Natural killer cell (primary cell): ENCODE measurements at regions of chr6 and their contacts with region 1.

Region 1: GRCh38 chr6:27157459-27158315 is 89.8 kb upstream of the PRSS16 start:
- DNase-seq: peak; percentile 68 to 92
- ATAC-seq: peak; percentile 78 to 86 (median 84)
- H3K4me3 ChIP-seq: peak overlapping the region; percentile 48
- H3K4me3 Mint-ChIP-seq: peak overlapping the region; percentile 89
- H3K27ac ChIP-seq: peak overlapping the region; percentile 34
- H3K27ac Mint-ChIP-seq: peak overlapping the region; percentile 90 to 91
- H3K4me1 ChIP-seq: peaks cover 13% of the 10 kb centered on the region
- H3K4me1 Mint-ChIP-seq: peaks cover 29 to 36% of the 10 kb centered on the region in 2 donors
- H3K27me3 ChIP-seq: no peaks in the 10 kb centered on the region
- H3K27me3 Mint-ChIP-seq: peaks cover 0 to 7% of the 10 kb centered on the region in 2 donors
- CTCF ChIP-seq: peak; percentile 28

Region 2: GRCh38 chr6:26351544-26351953 is 806.1 kb before region 1 on chr6:
- intact Hi-C with region 1: no loop called
- DNase-seq: no peak
- ATAC-seq: peak in 1 of 3 donors; percentile 18
- H3K4me3 ChIP-seq: no peak overlapping the region
- H3K4me3 Mint-ChIP-seq: no peak overlapping the region
- H3K27ac ChIP-seq: no peak overlapping the region
- H3K27ac Mint-ChIP-seq: no peak overlapping the region
- H3K4me1 ChIP-seq: no peaks in the 10 kb centered on the region
- H3K4me1 Mint-ChIP-seq: no peaks in the 10 kb centered on the region
- H3K27me3 ChIP-seq: no peaks in the 10 kb centered on the region
- H3K27me3 Mint-ChIP-seq: peaks cover 0 to 7% of the 10 kb centered on the region in 2 donors
- CTCF ChIP-seq: no peak

Region 3: DNA sequence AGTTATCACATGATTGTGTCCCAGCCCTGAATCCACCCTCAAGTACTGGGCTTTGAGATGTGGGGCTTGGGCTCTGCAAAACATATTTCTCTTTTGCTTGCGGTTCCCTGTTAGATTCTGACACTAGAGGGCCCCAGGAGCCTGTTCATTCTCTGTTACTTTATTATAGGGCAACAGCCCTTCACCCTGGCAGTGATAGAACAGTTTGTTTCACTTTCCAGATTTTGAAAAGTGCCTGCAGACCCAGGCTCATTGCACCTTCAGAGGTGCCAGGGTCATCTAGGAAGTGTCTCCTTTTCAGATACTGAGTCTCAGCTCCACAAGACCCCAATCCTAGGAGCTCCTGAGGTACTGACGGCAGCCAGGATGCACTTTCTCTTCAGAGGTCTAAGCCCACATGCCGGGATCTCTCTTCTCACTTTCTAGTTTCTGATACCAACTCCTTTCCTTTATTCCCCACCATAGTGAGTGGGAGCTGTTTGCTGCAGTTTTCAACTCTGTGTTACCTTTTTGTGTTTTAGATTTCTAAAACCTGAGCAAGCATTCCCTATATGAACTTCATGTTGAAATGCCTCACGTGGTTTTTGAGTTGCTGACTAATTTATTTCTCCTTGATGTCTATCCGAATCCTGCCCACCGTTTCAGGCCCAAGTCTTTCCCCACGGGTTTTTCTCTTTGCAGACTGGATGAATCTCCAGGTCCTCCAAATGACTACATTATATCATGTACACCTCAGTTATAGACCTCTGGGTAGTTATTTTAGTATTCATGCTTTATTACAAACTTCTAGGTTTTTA is 550.1 kb before region 1 on chr6:
- intact Hi-C with region 1: loop called (anchors 5 kb)
- DNase-seq: peak in 1 of 2 donors; percentile 81
- ATAC-seq: peak; percentile 81 to 96 (median 93)
- H3K4me3 ChIP-seq: no peak overlapping the region
- H3K4me3 Mint-ChIP-seq: peak overlapping the region; percentile 47
- H3K27ac ChIP-seq: no peak overlapping the region
- H3K27ac Mint-ChIP-seq: no peak overlapping the region
- H3K4me1 ChIP-seq: no peaks in the 10 kb centered on the region
- H3K4me1 Mint-ChIP-seq: peaks cover 5 to 6% of the 10 kb centered on the region in 2 donors
- H3K27me3 ChIP-seq: no peaks in the 10 kb centered on the region
- H3K27me3 Mint-ChIP-seq: peaks cover 16 to 23% of the 10 kb centered on the region in 2 donors
- CTCF ChIP-seq: peak; percentile 66

Region 4: DNA sequence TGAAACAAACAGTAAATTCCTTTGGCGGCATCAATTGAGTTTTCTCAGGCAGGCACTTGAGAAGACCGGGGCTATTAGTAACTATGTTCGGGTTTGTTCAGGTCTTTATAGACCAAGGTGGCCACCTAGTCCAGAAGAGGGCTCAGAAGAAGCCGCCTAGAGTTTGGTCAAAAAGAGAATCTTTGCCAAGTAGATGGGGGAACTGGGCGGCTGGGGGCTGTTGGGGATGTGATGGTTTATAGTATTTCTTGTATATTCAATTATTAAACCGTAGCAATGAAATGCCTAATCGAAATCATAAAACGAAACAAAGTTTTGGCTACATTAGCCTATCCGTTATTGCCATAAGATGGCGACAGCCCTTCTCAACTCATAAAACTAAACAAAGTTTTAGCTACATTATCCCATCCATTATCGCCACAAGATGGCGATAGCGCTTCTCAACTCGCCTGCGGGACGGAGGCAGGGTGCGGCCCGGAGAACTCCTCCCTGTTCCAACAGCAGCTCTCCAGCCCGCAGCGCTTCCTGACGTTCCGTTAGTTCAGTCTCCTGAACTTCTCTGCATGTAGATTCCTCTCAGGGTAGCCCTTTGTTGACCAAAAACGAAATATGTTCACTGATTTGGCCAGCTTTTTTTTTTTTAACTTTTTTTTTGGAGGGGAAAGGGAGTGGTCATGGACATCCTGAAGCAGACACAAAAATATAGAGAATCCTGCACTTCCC is 30.7 kb before region 1 on chr6:
- intact Hi-C with region 1: loop called (anchors 1 kb)
- DNase-seq: peak; percentile 68 to 95
- ATAC-seq: peak; percentile 79 to 88 (median 82)
- H3K4me3 ChIP-seq: peak overlapping the region; percentile 12
- H3K4me3 Mint-ChIP-seq: peak overlapping the region; percentile 82
- H3K27ac ChIP-seq: peak overlapping the region; percentile 39
- H3K27ac Mint-ChIP-seq: peak overlapping the region; percentile 69 to 84
- H3K4me1 ChIP-seq: peaks cover 15% of the 10 kb centered on the region
- H3K4me1 Mint-ChIP-seq: peaks cover 14% of the 10 kb centered on the region in 2 donors
- H3K27me3 ChIP-seq: no peaks in the 10 kb centered on the region
- H3K27me3 Mint-ChIP-seq: no peaks in the 10 kb centered on the region
- CTCF ChIP-seq: peak; percentile 89

Region 5: DNA sequence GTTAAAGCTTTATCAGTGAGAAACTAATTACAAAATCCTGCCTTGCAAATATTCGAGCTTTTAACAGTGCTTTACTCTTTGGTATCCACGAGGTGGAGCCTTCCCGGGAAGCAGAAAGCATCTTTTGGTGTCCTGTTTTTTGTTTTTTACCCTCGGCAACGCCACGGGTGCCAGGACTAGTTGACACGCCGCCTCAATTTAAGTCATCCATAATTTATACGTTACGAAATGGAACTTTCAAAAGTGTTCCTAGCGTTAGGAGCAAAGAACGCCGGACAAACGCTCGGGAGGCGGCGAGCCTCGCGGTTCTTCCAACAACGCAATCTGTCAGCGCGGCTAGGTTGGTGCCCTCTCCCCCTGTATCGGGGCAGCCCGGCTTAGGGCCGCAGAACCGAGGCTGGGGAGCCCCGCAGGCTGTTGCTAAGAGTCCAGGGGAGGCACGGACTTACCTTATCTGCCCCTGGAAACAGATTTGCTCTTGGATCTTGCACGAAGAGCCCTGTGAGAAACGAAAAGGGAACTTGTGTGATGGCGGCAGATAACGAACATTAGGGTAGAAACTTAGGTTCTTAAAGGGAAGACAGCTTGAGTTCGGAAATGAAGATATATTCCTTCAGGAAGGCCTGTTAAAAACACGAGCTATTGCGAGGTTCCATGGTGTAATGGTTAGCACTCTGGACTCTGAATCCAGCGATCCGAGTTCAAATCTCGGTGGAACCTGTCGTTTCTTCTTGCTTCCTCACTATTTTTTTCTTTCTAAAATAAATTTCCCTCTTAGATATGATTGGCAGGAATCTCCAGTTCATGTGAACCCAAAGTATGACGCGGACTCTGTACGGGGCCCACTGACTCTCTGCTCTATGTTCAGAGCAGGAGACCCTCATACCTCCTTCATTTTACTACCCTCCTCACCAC is 361.5 kb after region 1 on chr6:
- intact Hi-C with region 1: loop called (anchors 5 kb)
- DNase-seq: peak; percentile 49 to 88
- ATAC-seq: peak; percentile 61 to 81 (median 81)
- H3K4me3 ChIP-seq: peak overlapping the region; percentile 82
- H3K4me3 Mint-ChIP-seq: peak overlapping the region; percentile 91
- H3K27ac ChIP-seq: peak overlapping the region; percentile 71
- H3K27ac Mint-ChIP-seq: peak overlapping the region; percentile 87 to 88
- H3K4me1 ChIP-seq: peaks cover 11% of the 10 kb centered on the region
- H3K4me1 Mint-ChIP-seq: peaks cover 16 to 17% of the 10 kb centered on the region in 2 donors
- H3K27me3 ChIP-seq: peaks cover 9% of the 10 kb centered on the region
- H3K27me3 Mint-ChIP-seq: peaks cover 29 to 46% of the 10 kb centered on the region in 2 donors
- CTCF ChIP-seq: peak; percentile 79

Region 6: GRCh38 chr6:27687154-27688013 is 529.7 kb after region 1 on chr6:
- intact Hi-C with region 1: loop called (anchors 2 kb)
- DNase-seq: peak; percentile 67 to 88
- ATAC-seq: peak; percentile 75 to 83 (median 76)
- H3K4me3 ChIP-seq: peak overlapping the region; percentile 52
- H3K4me3 Mint-ChIP-seq: peak overlapping the region; percentile 95
- H3K27ac ChIP-seq: no peak overlapping the region
- H3K27ac Mint-ChIP-seq: peak overlapping the region; percentile 94 to 96
- H3K4me1 ChIP-seq: peaks cover 12% of the 10 kb centered on the region
- H3K4me1 Mint-ChIP-seq: peaks cover 14 to 22% of the 10 kb centered on the region in 2 donors
- H3K27me3 ChIP-seq: peaks cover 2% of the 10 kb centered on the region
- H3K27me3 Mint-ChIP-seq: peaks cover 8 to 32% of the 10 kb centered on the region in 2 donors
- CTCF ChIP-seq: peak; percentile 53

Region 7: DNA sequence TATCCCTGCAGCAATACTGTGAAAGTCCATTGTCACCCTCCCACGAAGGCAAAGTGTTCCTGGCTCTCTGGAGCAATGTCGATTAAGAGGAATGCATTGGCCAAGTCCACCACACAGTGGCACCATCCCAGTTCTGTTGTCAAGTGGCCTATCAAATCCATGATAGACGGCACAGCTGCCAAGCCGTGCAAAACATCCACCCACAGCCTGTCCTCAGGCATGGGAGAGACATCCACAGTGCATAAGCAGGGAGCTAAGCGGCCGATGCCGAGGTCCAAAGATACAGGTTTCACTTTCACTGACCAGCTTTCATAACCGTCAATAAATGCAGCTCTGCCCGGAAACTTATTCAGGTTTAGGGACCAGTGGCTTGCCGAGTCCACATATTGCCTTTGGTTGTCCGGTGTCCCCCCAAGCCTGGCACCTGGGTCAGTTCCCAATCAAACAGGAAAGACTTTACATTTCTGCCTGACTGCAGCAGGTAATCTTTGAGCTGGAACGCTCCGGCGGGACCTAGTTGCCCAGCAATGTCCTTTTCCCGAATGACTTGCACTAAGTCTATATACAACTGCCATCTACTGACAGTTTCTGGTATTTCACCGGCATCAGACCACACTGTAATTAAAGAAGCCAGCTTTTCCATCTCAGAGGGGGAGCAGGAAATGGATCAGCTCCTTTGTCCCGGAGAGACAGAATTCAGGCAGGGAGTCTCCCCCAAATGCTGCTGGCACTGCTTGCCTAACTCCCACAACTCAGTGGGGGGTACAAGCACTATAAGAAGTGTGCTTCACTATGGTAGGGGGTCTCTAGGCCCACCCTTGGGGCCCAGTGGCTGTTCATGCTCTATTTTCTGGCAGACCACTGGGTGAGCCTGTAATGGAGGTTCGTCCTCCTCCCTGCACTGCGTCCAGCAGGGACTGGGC is 1198.3 kb after region 1 on chr6:
- intact Hi-C with region 1: loop called (anchors 1 kb)
- DNase-seq: peak; percentile 55 to 86
- ATAC-seq: peak; percentile 91 to 96 (median 91)
- H3K4me3 ChIP-seq: peak overlapping the region; percentile 64
- H3K4me3 Mint-ChIP-seq: peak overlapping the region; percentile 96
- H3K27ac ChIP-seq: peak overlapping the region; percentile 43
- H3K27ac Mint-ChIP-seq: peak overlapping the region; percentile 81 to 93
- H3K4me1 ChIP-seq: peaks cover 18% of the 10 kb centered on the region
- H3K4me1 Mint-ChIP-seq: peaks cover 20 to 23% of the 10 kb centered on the region in 2 donors
- H3K27me3 ChIP-seq: no peaks in the 10 kb centered on the region
- H3K27me3 Mint-ChIP-seq: no peaks in the 10 kb centered on the region
- CTCF ChIP-seq: peak; percentile 91